GM12878 (cell line): ENCODE measurements at regions of chr1 and their contacts with region 1.

Region 1: GRCh38 chr1:212749821-212750535 is 41.6 kb downstream of the NSL1 start:
- DNase-seq: peak; percentile 51
- ATAC-seq: peak; percentile 65
- H3K4me3 ChIP-seq: peak overlapping the region; percentile 32; the same call in 1 of the 2 replicates
- H3K27ac ChIP-seq: peak overlapping the region; percentile 59
- H3K4me1 ChIP-seq: peaks cover 41% of the 10 kb centered on the region
- H3K27me3 ChIP-seq: no peaks in the 10 kb centered on the region
- CTCF ChIP-seq: peak; percentile 52 to 69 (median 53); a peak in 5 of 6 replicates
- EP300 ChIP-seq: no peak; a peak in 1 of 4 replicates
- POLR2A ChIP-seq: no peak
- RAD21 ChIP-seq: peak; percentile 47

Region 2: GRCh38 chr1:212699104-212699624 is 50.8 kb before region 1 on chr1:
- CTCF ChIA-PET with region 1: interaction called, 8 read pairs
- POLR2A ChIA-PET with region 1: interaction called, 4 read pairs
- RAD21 ChIA-PET with region 1: interaction called, 8 read pairs
- SMC1A ChIA-PET with region 1: interaction called, 11 read pairs
- in situ Hi-C with region 1: no loop called
- intact Hi-C with region 1: loop called (anchors 5 kb)
- DNase-seq: no peak
- ATAC-seq: peak; percentile 81
- H3K4me3 ChIP-seq: peak overlapping the region; percentile 82
- H3K27ac ChIP-seq: no peak overlapping the region
- H3K4me1 ChIP-seq: peaks cover 27% of the 10 kb centered on the region
- H3K27me3 ChIP-seq: no peaks in the 10 kb centered on the region
- CTCF ChIP-seq: peak; percentile 48 to 79 (median 71)
- EP300 ChIP-seq: no peak
- POLR2A ChIP-seq: no peak
- RAD21 ChIP-seq: peak; percentile 51

Region 3: GRCh38 chr1:212738330-212738729 is 11.6 kb before region 1 on chr1:
- CTCF ChIA-PET with region 1: interaction called, 13 read pairs
- POLR2A ChIA-PET with region 1: no interaction called
- RAD21 ChIA-PET with region 1: no interaction called
- SMC1A ChIA-PET with region 1: interaction called, 8 read pairs
- in situ Hi-C with region 1: no loop called
- intact Hi-C with region 1: no loop called
- DNase-seq: no peak
- ATAC-seq: no peak
- H3K4me3 ChIP-seq: no peak overlapping the region
- H3K27ac ChIP-seq: no peak overlapping the region
- H3K4me1 ChIP-seq: peaks cover 3% of the 10 kb centered on the region; the same call in 1 of the 2 replicates
- H3K27me3 ChIP-seq: no peaks in the 10 kb centered on the region
- CTCF ChIP-seq: no peak
- EP300 ChIP-seq: no peak
- POLR2A ChIP-seq: no peak
- RAD21 ChIP-seq: no peak

Region 4: GRCh38 chr1:212774584-212774983 is 24.6 kb after region 1 on chr1:
- CTCF ChIA-PET with region 1: interaction called, 13 read pairs
- POLR2A ChIA-PET with region 1: no interaction called
- RAD21 ChIA-PET with region 1: interaction called, 4 read pairs
- SMC1A ChIA-PET with region 1: interaction called, 11 read pairs
- in situ Hi-C with region 1: no loop called
- intact Hi-C with region 1: no loop called
- DNase-seq: no peak
- ATAC-seq: peak; percentile 53
- H3K4me3 ChIP-seq: no peak overlapping the region
- H3K27ac ChIP-seq: no peak overlapping the region
- H3K4me1 ChIP-seq: peaks cover 4% of the 10 kb centered on the region; the same call in 1 of the 2 replicates
- H3K27me3 ChIP-seq: no peaks in the 10 kb centered on the region
- CTCF ChIP-seq: no peak
- EP300 ChIP-seq: no peak
- POLR2A ChIP-seq: no peak
- RAD21 ChIP-seq: no peak